Activated CD4-positive, alpha-beta memory T cell treated with anti-CD3 and anti-CD28 coated beads for 36 hours (primary cell): ENCODE measurements at regions of chr5 and their contacts with region 1.

Region 1: GRCh38 chr5:127030259-127031146 is at the start of gene MARCHF3:
- DNase-seq: peak; percentile 96
- H3K4me3 Mint-ChIP-seq: peak within 1 kb of the TSS; percentile 89
- H3K27ac Mint-ChIP-seq: no peak within 1 kb of the TSS
- H3K4me1 Mint-ChIP-seq: peaks cover 16% of the 10 kb centered on the region
- H3K27me3 Mint-ChIP-seq: peaks cover 3% of the 10 kb centered on the region
- total RNA-seq, gene MARCHF3: 4.0 to 4.4 TPM

Region 2: GRCh38 chr5:126600631-126601511 is 429.6 kb before region 1 on chr5 and contains the start of gene PHAX:
- CTCF ChIA-PET with region 1: no interaction called
- POLR2A ChIA-PET with region 1: no interaction called
- intact Hi-C with region 1: loop called (anchors 2 kb)
- DNase-seq: peak; percentile 82
- H3K4me3 Mint-ChIP-seq: peak within 1 kb of the TSS; percentile 99
- H3K27ac Mint-ChIP-seq: peak within 1 kb of the TSS; percentile 97
- H3K4me1 Mint-ChIP-seq: peaks cover 35% of the 10 kb centered on the region
- H3K27me3 Mint-ChIP-seq: no peaks in the 10 kb centered on the region
- total RNA-seq, gene PHAX: 40.7 to 43.2 TPM

Region 3: DNA sequence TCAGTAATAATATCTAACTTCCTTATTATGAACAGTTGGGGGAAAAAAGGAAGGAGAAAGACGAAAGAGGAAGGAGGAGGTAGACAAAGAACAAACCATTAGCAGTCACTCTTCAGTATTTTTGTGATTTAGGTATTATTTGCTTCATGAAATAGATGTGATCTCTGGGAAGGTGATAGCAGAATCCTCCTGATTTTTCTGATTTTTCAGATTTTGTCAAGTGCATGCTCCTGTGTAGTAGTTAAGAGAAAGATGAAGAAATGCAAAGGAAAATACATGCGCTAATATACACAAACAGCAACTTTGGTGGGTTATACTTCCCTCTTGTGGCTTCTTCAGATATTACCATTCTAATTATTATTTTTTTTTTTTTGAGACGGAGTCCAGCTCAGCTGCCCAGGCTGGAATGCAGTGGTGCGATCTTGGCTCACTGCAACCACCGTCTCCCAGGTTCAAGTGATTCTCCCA is 221.9 kb before region 1 on chr5:
- CTCF ChIA-PET with region 1: no interaction called
- POLR2A ChIA-PET with region 1: no interaction called
- intact Hi-C with region 1: loop called (anchors 10 kb)
- DNase-seq: no peak
- H3K4me3 Mint-ChIP-seq: no peak overlapping the region
- H3K27ac Mint-ChIP-seq: peak overlapping the region; percentile 16
- H3K4me1 Mint-ChIP-seq: peaks cover 55% of the 10 kb centered on the region
- H3K27me3 Mint-ChIP-seq: no peaks in the 10 kb centered on the region

Region 4: DNA sequence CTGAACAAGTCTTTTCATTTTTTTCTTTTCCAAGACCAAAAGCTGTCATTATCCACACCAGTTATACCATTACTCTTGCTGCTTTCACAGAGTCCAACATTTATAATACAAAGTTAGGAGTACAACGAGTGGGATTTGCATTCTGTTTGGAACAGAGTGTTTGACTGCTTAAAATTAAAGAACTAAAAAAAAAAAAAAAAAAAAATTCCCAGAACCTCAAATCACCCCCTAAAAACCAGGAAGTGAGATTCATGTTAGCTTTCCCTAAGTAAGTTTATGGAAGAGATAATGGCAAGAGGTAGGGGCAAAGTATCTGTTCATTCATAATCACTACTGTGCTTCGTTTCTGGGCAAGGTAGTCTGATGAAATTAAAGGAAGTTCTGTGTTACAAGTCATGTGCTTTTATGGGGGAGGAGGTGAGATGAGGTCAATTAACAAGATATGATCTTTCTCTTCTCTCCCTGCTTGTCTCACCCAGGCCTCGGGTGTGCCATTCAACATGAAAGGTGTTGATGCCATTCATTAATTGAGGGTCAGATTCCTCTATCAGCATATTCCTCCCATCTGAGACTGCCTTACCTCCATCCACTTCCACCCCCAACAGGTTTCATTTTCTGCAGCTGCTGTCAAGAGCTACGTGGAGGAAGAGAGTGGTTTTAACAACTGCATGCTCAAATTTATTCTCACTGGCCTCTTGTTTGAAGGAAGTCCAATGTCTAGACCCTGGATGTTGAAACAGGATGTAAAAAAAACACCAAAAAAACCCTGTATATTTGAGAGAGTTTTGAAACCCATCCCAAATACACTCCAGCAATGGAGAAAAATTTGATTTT is 58.2 kb before region 1 on chr5:
- CTCF ChIA-PET with region 1: no interaction called
- POLR2A ChIA-PET with region 1: interaction called, 3 read pairs
- intact Hi-C with region 1: loop called (anchors 2 kb)
- DNase-seq: peak; percentile 26
- H3K4me3 Mint-ChIP-seq: peak overlapping the region; percentile 47
- H3K27ac Mint-ChIP-seq: peak overlapping the region; percentile 78
- H3K4me1 Mint-ChIP-seq: peaks cover 24% of the 10 kb centered on the region
- H3K27me3 Mint-ChIP-seq: no peaks in the 10 kb centered on the region

Region 5: GRCh38 chr5:127011961-127012644 is 18.4 kb before region 1 on chr5:
- CTCF ChIA-PET with region 1: interaction called, 3 read pairs
- POLR2A ChIA-PET with region 1: interaction called, 3 read pairs
- intact Hi-C with region 1: loop called (anchors 2 kb)
- DNase-seq: no peak
- H3K4me3 Mint-ChIP-seq: no peak overlapping the region
- H3K27ac Mint-ChIP-seq: no peak overlapping the region
- H3K4me1 Mint-ChIP-seq: peaks cover 30% of the 10 kb centered on the region
- H3K27me3 Mint-ChIP-seq: peaks cover 1% of the 10 kb centered on the region

Region 6: GRCh38 chr5:127060470-127060985 is 30.0 kb after region 1 on chr5:
- CTCF ChIA-PET with region 1: no interaction called
- POLR2A ChIA-PET with region 1: no interaction called
- intact Hi-C with region 1: no loop called
- DNase-seq: no peak
- H3K4me3 Mint-ChIP-seq: no peak overlapping the region
- H3K27ac Mint-ChIP-seq: no peak overlapping the region
- H3K4me1 Mint-ChIP-seq: peaks cover 4% of the 10 kb centered on the region
- H3K27me3 Mint-ChIP-seq: no peaks in the 10 kb centered on the region

Region 7: GRCh38 chr5:127229185-127229889 is 198.8 kb after region 1 on chr5:
- CTCF ChIA-PET with region 1: no interaction called
- POLR2A ChIA-PET with region 1: no interaction called
- intact Hi-C with region 1: loop called (anchors 5 kb)
- DNase-seq: peak; percentile 61
- H3K4me3 Mint-ChIP-seq: peak overlapping the region; percentile 60
- H3K27ac Mint-ChIP-seq: no peak overlapping the region
- H3K4me1 Mint-ChIP-seq: peaks cover 21% of the 10 kb centered on the region
- H3K27me3 Mint-ChIP-seq: no peaks in the 10 kb centered on the region

Region 8: DNA sequence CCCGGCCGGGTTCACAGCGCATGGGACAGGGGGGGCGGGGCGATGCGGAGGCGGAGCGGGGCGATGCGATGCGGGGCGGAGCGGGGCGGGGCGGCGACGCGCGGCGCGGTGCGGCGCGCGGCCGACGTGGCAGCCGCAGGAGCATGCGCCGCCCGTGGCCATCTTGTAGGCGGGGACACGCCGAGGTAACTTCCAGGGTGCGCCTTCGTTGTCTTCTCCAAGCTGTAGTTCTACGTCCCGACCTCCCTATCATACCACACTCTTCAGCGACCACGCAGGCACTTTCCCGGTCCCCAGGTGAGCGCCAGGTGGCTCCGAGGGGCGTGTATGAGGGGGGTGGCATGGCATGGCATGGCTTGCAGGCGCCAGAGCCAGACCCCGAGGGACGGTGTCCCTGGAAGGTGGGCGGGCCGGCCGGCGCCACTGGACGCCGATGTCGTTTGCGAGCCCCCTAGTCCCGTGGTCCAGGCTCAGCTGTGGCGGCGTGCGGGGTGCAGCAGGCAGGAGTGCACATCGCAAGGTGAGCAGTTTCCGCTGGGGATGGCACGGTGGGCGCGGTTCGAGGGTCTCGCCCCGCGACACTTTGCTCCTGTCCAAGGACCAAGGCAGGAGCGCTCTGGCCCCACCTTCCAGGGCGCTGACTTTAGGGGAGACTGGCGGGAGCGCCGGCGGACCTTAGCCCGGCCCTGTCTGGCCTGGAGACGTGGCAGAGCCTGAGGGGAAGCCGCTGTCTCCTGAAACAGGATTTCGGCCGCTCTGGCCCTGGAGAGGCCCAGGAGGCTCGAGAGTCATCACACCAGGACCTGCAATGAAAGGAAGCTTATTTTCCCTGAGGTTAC is 487.2 kb after region 1 on chr5 and contains the start of gene PRRC1:
- CTCF ChIA-PET with region 1: no interaction called
- POLR2A ChIA-PET with region 1: no interaction called
- intact Hi-C with region 1: loop called (anchors 10 kb)
- DNase-seq: peak; percentile 87
- H3K4me3 Mint-ChIP-seq: peak within 1 kb of the TSS; percentile 84
- H3K27ac Mint-ChIP-seq: peak within 1 kb of the TSS; percentile 50
- H3K4me1 Mint-ChIP-seq: peaks cover 33% of the 10 kb centered on the region
- H3K27me3 Mint-ChIP-seq: peaks cover 3% of the 10 kb centered on the region
- total RNA-seq, gene PRRC1: 39.4 to 44.0 TPM